HEK293 (cell line): ENCODE measurements at regions of chr12 and their contacts with region 1.

Region 1: DNA sequence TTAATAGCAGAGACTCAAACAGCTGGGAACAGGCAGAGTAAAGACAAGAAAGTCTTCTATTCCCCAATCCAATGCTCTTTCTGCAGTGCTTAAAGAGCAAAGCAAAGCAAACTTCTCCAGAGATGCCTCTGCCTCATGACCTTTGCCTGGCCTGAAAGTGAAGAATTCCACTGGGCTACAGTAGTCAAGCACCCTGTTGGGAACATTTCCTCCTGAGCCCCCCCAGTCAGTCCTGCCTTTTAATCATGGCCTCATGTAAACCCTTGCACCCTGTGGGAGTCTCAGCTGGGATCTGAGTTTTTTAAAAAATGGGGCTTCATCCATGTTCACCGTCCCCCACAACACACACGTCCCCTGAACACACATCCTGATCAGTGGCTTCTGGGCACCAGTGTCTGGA is 62.7 kb upstream of the TSPAN11 start:
- H3K4me3 ChIP-seq: no peak overlapping the region
- H3K27ac ChIP-seq: no peak overlapping the region
- H3K4me1 ChIP-seq: no peaks in the 10 kb centered on the region
- CTCF ChIP-seq: no peak

Region 2: GRCh38 chr12:30840715-30841114 is 23.1 kb before region 1 on chr12:
- CTCF ChIA-PET with region 1: no interaction called
- POLR2A ChIA-PET with region 1: no interaction called
- H3K4me3 ChIP-seq: no peak overlapping the region
- H3K27ac ChIP-seq: no peak overlapping the region
- H3K4me1 ChIP-seq: no peaks in the 10 kb centered on the region
- CTCF ChIP-seq: no peak

Region 3: GRCh38 chr12:30985814-30986452 is 122.1 kb after region 1 on chr12:
- CTCF ChIA-PET with region 1: interaction called, 14 read pairs
- POLR2A ChIA-PET with region 1: no interaction called
- H3K4me3 ChIP-seq: no peak overlapping the region
- H3K27ac ChIP-seq: no peak overlapping the region
- H3K4me1 ChIP-seq: no peaks in the 10 kb centered on the region
- CTCF ChIP-seq: peak; percentile 62